Dendritic cell treated with granulocyte-macrophage colony-stimulating factor and Interleukin-4, amounts not matched to agents 40 ng/mL and 50 ng/mL, for 4 days (primary cell): ENCODE measurements at regions of chr2 and their contacts with region 1.

Region 1: GRCh38 chr2:30095402-30095801 is 51.4 kb upstream of the YPEL5 start:
- H3K4me3 Mint-ChIP-seq: no peak overlapping the region
- H3K27ac Mint-ChIP-seq: no peak overlapping the region
- H3K4me1 Mint-ChIP-seq: no peaks in the 10 kb centered on the region
- H3K27me3 Mint-ChIP-seq: peaks cover 7% of the 10 kb centered on the region

Region 2: GRCh38 chr2:30115141-30115980 is 20.0 kb after region 1 on chr2:
- intact Hi-C with region 1: loop called (anchors 1 kb)
- H3K4me3 Mint-ChIP-seq: no peak overlapping the region
- H3K27ac Mint-ChIP-seq: no peak overlapping the region
- H3K4me1 Mint-ChIP-seq: peaks cover 6% of the 10 kb centered on the region
- H3K27me3 Mint-ChIP-seq: peaks cover 4% of the 10 kb centered on the region

Region 3: GRCh38 chr2:30146438-30147147 is 51.2 kb after region 1 on chr2 and contains the start of gene YPEL5:
- intact Hi-C with region 1: no loop called
- H3K4me3 Mint-ChIP-seq: peak within 1 kb of the TSS; percentile 75
- H3K27ac Mint-ChIP-seq: peak within 1 kb of the TSS; percentile 93
- H3K4me1 Mint-ChIP-seq: peaks cover 29% of the 10 kb centered on the region
- H3K27me3 Mint-ChIP-seq: no peaks in the 10 kb centered on the region